ENCODE measurements at regions of chr19 and their contacts with region 1.

Region 1: DNA sequence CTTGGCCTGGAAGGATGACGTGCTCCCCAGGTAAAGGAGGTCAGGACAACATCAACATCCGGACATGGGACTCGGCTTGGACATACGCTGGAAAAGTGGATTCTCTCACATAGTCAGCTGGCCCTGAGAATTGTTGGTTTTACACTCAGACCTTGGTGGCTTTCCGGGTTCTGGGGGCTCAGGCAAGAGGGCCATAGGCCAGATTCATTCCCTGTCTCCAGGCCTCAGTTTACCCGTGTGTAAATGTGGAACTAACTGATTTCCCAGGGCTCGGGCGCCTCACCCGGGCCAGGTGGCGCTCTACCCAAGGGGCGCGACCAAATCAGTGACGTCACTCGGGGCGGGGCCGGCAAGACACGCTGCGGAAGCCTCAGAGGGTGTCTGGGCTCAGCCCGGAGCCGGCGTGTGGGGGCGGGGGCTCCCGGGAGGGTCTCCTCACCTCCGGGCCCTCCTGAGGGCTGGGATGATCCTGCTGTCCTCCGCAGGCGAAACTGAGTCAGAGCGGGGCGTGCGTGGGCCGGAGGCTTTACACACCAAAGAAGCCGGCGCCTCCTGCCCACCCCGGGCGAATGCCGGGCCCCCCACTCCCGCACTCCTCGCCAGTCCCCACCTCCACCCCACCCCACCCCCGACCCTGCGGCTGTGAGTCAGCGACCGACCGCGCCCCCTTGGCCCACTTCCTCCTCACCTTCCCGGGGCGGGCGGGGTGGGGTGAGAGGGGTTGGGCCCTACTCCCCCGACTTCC is 861 bp upstream of the VASP start:
- DNase-seq: peak; percentile 99
- H3K4me3 Mint-ChIP-seq: peak overlapping the region; percentile 92
- H3K27ac Mint-ChIP-seq: peak overlapping the region; percentile 97
- H3K4me1 Mint-ChIP-seq: peaks cover 37% of the 10 kb centered on the region
- H3K27me3 Mint-ChIP-seq: no peaks in the 10 kb centered on the region

Region 2: GRCh38 chr19:45405435-45406225 is 100.8 kb before region 1 on chr19:
- intact Hi-C with region 1: no loop called
- DNase-seq: peak; percentile 95
- H3K4me3 Mint-ChIP-seq: peak overlapping the region; percentile 97
- H3K27ac Mint-ChIP-seq: peak overlapping the region; percentile 89
- H3K4me1 Mint-ChIP-seq: peaks cover 36% of the 10 kb centered on the region
- H3K27me3 Mint-ChIP-seq: peaks cover 12% of the 10 kb centered on the region

Region 3: DNA sequence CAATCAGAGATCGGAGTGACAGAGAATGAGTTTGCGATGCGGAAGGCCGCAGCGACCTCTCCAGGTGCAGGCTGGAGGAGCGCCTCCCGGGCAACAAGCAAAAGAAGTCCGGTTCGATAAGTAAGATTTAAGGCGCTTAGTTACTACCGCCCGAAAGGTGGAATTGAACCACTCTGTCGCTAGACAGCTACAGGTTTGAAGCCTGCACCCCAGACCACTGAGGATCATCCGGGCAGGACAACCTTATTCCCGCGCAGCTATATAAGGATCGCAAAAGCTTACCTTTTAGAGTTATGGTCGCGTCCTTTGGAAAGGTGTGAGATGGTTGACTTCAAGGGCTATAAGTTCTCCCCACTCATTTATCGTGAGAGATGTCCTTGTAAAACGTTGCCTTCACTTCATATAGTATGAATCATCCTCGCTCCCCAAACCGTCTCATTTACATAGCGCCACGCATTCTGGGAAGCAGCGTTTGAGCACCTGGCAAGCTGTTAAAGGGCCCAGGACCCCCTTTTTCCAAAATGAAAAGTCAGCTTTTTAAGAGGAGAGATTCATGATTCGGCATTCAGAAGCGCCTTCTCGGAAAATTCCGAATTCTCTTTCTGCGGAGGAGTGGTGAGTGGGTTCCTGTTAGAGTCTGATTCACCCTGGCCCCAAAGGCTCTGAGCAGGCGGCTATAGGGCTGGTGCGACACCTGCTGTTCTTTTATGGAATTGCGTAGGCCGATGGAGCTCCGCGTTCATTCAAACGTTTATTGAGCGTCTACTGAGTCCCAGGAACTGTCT is 27.8 kb before region 1 on chr19:
- intact Hi-C with region 1: loop called (anchors 2 kb)
- DNase-seq: peak; percentile 97
- H3K4me3 Mint-ChIP-seq: peak overlapping the region; percentile 68
- H3K27ac Mint-ChIP-seq: peak overlapping the region; percentile 91
- H3K4me1 Mint-ChIP-seq: peaks cover 29% of the 10 kb centered on the region
- H3K27me3 Mint-ChIP-seq: peaks cover 32% of the 10 kb centered on the region

Region 4: DNA sequence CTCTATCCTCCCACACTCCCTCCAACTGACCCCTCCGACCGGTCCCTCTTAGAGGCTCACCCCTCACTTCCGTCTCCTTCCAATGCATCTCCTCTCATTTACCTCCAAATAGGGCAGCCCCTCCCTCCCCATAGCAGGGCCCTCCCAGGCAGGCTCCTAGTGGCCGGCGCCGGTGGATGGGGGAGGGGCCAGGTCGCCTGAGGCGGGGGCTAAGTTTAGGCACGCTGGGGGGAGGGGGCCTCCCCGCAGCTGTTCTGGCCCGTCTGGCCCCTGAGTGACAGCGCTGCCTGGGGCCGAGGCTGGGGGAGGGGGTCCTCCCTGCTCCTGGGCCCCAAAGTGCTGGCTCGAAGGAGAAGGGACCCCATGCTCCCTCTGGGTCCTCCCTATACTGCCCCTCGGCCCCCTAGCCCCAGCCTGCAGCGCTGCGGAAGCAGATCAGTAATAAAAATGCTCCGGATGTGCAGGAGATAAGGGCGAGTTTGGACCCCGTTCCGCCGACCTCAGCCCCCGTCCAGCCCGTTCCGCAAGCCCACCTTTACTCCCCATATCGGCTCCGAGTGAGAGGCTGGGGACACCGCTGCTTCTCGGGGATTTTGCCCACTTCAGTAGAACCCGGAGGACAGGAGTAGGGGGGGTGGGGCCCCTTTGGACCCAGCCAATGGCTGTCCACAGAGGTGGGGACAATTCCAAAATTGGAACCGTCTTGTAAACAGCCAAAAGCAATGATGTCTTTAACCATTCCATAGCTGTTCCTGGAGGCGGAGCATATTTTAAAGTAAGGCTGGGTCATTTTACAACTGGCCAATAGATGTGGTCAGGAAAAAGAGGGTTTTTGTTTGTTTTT is 13.6 kb before region 1 on chr19:
- intact Hi-C with region 1: loop called (anchors 1 kb)
- DNase-seq: peak; percentile 78
- H3K4me3 Mint-ChIP-seq: peak overlapping the region; percentile 82
- H3K27ac Mint-ChIP-seq: peak overlapping the region; percentile 43
- H3K4me1 Mint-ChIP-seq: peaks cover 20% of the 10 kb centered on the region
- H3K27me3 Mint-ChIP-seq: peaks cover 21% of the 10 kb centered on the region

Region 5: GRCh38 chr19:45523642-45524256 is 17.3 kb after region 1 on chr19:
- intact Hi-C with region 1: loop called (anchors 2 kb)
- DNase-seq: peak; percentile 92
- H3K4me3 Mint-ChIP-seq: no peak overlapping the region
- H3K27ac Mint-ChIP-seq: peak overlapping the region; percentile 53
- H3K4me1 Mint-ChIP-seq: peaks cover 18% of the 10 kb centered on the region
- H3K27me3 Mint-ChIP-seq: no peaks in the 10 kb centered on the region

Region 6: DNA sequence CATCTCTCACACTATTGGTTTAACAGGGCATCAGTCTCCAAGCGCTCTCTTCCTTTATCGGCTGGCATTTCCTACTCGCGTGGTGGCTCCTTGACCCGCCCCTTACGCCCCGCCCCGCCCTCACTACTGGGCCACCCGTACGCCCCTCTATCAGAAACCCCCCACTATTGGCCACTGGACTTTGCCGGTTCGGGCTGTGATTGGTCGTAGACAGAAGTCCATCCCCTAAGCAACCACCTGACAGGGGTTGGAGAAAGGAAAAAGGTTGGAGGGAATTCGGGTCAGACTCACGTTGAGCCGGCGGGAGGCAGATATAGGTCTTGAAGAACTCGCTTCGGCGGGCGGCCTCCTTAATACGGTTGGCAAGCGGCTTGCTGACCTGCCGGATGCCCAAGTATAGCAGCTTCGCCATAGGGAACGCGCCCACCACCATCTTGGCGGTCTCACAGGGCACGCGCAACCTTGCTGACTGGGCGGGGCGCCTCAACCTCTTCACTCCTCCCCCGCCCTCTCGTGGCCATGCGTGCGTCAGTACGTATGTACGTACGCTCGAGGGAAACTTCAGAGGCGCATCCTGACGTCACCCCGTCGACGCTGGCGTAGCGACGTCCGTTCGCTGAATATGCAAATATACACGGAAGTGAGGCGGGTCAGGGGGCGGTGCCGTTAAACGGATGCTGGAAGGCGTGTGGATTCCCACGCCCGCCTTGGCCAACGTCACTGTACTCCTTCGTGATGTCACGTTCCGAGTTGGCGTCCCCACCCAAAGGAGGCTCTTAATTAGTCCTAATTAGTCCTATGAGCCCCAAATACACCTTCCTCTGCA is 78.1 kb after region 1 on chr19 and contains the start of gene OPA3:
- intact Hi-C with region 1: loop called (anchors 1 kb)
- DNase-seq: peak; percentile 100
- H3K4me3 Mint-ChIP-seq: peak within 1 kb of the TSS; percentile 98
- H3K27ac Mint-ChIP-seq: peak within 1 kb of the TSS; percentile 99
- H3K4me1 Mint-ChIP-seq: peaks cover 13% of the 10 kb centered on the region
- H3K27me3 Mint-ChIP-seq: peaks cover 1% of the 10 kb centered on the region
- total RNA-seq, gene OPA3: 14.0 and 15.3 TPM in 2 replicates

Region 7: GRCh38 chr19:45657520-45658167 is 151.2 kb after region 1 on chr19:
- intact Hi-C with region 1: no loop called
- DNase-seq: no peak
- H3K4me3 Mint-ChIP-seq: no peak overlapping the region
- H3K27ac Mint-ChIP-seq: no peak overlapping the region
- H3K4me1 Mint-ChIP-seq: no peaks in the 10 kb centered on the region
- H3K27me3 Mint-ChIP-seq: peaks cover 15% of the 10 kb centered on the region

Region 8: GRCh38 chr19:45681391-45682015 is 175.1 kb after region 1 on chr19:
- intact Hi-C with region 1: loop called (anchors 2 kb)
- DNase-seq: peak; percentile 97
- H3K4me3 Mint-ChIP-seq: peak overlapping the region; percentile 72
- H3K27ac Mint-ChIP-seq: peak overlapping the region; percentile 39
- H3K4me1 Mint-ChIP-seq: peaks cover 16% of the 10 kb centered on the region
- H3K27me3 Mint-ChIP-seq: peaks cover 2% of the 10 kb centered on the region